ENCODE measurements at regions of chr1 and their contacts with region 1.

Region 1: DNA sequence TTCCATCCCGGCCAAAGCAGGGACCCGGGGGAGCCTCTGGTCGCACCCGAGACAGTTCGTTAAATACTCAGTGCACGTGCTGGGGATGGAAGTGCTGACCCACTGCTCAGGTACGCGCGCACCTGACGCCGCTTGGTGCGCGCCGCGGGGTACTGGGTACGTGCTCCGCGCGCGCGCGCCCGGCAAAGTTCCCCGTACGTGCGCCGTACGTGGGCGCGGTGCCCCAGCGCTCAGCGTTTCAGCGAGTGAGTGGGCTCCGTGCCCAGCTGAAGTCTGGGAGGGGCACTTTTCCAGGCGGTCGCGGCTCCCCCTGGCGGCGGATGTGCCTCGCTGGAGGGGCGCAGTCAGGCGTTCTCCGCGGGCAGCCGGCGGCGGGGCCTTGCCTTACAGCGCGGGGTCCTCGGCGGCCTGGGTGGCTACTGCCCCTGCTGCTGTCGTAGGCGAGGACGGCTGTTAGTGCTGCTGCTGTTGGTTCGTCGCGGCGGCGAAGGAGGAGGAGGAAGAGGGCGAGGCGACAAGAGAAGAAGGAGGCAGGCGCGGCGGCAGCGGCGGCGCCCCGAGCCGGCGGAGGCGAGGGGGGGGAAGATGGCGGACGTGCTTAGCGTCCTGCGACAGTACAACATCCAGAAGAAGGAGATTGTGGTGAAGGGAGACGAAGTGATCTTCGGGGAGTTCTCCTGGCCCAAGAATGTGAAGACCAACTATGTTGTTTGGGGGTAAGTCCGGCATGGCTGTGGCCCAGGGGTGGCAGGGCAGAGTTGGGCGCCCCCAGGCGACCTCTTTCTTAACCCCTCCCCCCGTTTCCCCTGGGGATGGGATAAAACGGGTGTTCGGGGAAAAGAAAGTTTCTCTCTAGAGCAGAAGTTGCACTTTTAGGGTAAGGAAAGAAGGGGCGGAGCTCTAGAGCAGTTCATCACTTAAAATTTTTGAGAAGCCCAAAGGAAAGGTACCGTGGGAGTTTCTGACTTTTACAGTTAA is at the start of gene CDC73:
- DNase-seq: peak; percentile 96
- H3K4me3 ChIP-seq: peak within 1 kb of the TSS; percentile 68 to 77
- H3K27ac ChIP-seq: peak within 1 kb of the TSS; percentile 93 to 94
- H3K4me1 ChIP-seq: no peaks in the 10 kb centered on the region
- H3K27me3 ChIP-seq: no peaks in the 10 kb centered on the region
- CTCF ChIP-seq: peak; percentile 92 to 99 (median 96)
- POLR2A ChIP-seq: peak; percentile 86
- total RNA-seq, gene CDC73: 36.2 to 48.0 TPM

Region 2: DNA sequence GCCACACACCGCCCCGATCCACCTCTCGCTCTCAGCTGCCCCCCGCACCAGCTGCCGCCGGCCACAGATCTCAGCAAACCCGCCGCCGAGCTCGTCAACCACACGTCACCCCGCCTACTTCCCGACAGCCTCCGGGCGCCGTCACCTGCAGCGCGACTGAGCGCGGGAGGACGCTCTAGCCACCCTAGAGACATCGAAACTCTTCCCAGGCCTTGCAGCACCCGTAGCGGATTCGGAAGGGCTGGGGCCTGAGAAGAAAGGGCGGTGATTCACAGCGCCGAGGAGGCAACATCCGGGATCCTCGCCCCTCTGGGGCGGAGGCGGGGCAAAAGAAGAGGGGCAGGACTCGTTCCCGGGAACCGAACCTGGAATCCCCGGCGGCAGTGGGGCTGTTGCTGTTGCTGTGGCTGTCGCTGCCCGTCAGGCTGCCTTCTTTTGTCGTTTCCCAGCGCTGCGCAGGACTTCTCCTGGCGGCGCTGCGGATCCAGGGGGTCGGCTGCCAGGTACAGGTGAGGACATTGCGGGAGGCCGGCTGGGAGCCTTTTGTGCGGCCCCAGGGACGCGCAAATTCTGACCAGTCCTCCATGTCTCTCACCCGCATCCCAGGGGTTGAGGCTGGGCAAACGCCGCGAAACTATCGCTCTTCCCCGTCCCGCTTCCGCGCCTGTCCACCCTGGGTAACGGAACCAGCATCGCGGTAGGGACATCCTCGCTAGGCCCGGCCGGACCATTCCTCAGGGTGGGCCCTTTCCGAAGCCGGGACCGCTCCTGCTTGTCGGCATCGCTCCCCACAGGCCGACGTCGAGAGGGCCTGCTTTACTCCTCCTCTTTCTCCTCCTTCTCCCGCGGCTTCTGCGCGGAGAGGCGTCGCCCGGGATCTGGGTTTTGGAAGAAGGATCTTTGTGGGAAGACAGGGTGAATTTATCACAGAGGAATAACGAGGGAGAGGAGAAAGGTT is 62.4 kb before region 1 on chr1 and contains the starts of genes RO60 and UCHL5:
- intact Hi-C with region 1: loop called (anchors 5 kb)
- DNase-seq: peak; percentile 96
- H3K4me3 ChIP-seq: peak within 1 kb of the TSS; percentile 77 to 81
- H3K27ac ChIP-seq: peak within 1 kb of the TSS; percentile 95 to 98
- H3K4me1 ChIP-seq: no peaks in the 10 kb centered on the region
- H3K27me3 ChIP-seq: no peaks in the 10 kb centered on the region
- CTCF ChIP-seq: peak in 2 of 4 experiments; percentile 24 to 39
- POLR2A ChIP-seq: peak; percentile 81
- total RNA-seq, gene RO60: 92.8 to 93.8 TPM
- total RNA-seq, gene UCHL5: 28.7 to 36.9 TPM

Region 3: GRCh38 chr1:193104906-193105820 is 16.7 kb before region 1 on chr1 and contains the start of gene GLRX2:
- intact Hi-C with region 1: loop called (anchors 1 kb)
- DNase-seq: peak; percentile 88
- H3K4me3 ChIP-seq: peak within 1 kb of the TSS; percentile 90 to 94
- H3K27ac ChIP-seq: peak within 1 kb of the TSS; percentile 89 to 92
- H3K4me1 ChIP-seq: no peaks in the 10 kb centered on the region
- H3K27me3 ChIP-seq: no peaks in the 10 kb centered on the region
- CTCF ChIP-seq: peak in 1 of 4 experiments; percentile 15
- POLR2A ChIP-seq: peak; percentile 77
- total RNA-seq, gene GLRX2: 6.5 to 13.6 TPM

Measured in prostate gland (tissue), 2 donors.